Activated CD4-positive, alpha-beta memory T cell treated with anti-CD3 and anti-CD28 coated beads for 36 hours (primary cell): ENCODE measurements at regions of chr5 and their contacts with region 1.

Region 1: GRCh38 chr5:378301-378891 is 56.9 kb downstream of the AHRR start:
- DNase-seq: peak; percentile 74
- H3K4me3 Mint-ChIP-seq: peak overlapping the region; percentile 61
- H3K27ac Mint-ChIP-seq: peak overlapping the region; percentile 94
- H3K4me1 Mint-ChIP-seq: peaks cover 57% of the 10 kb centered on the region
- H3K27me3 Mint-ChIP-seq: peaks cover 9% of the 10 kb centered on the region

Region 2: DNA sequence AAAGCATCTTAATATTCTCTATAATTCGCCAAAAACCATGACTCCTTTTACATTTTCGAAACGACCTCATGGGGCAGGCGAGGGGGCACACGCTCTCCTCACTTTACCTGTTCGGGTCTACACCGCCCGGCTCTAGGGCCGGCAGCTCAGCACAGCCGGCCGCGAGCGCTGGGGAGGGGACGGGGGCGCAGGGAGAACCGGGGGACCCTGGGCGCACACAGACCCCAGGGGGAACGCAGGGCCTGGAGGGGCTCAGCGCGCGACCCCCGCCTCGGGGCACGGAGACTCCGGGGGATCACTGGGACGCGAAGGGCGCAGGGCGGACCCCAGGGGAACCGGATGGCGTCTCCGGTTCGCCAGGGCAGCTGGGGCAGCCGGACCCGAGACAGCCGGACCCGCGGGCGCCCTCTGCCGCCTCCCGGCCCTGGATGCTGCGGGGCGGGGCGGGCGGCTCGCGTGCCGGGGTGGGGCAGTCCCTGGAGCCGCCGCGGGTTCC is 57.1 kb before region 1 on chr5 and contains the start of gene AHRR:
- CTCF ChIA-PET with region 1: no interaction called
- POLR2A ChIA-PET with region 1: no interaction called
- intact Hi-C with region 1: no loop called
- DNase-seq: peak; percentile 71
- H3K4me3 Mint-ChIP-seq: peak within 1 kb of the TSS; percentile 69
- H3K27ac Mint-ChIP-seq: no peak within 1 kb of the TSS
- H3K4me1 Mint-ChIP-seq: peaks cover 9% of the 10 kb centered on the region
- H3K27me3 Mint-ChIP-seq: peaks cover 30% of the 10 kb centered on the region
- total RNA-seq, gene AHRR: 16.7 to 16.8 TPM

Region 3: DNA sequence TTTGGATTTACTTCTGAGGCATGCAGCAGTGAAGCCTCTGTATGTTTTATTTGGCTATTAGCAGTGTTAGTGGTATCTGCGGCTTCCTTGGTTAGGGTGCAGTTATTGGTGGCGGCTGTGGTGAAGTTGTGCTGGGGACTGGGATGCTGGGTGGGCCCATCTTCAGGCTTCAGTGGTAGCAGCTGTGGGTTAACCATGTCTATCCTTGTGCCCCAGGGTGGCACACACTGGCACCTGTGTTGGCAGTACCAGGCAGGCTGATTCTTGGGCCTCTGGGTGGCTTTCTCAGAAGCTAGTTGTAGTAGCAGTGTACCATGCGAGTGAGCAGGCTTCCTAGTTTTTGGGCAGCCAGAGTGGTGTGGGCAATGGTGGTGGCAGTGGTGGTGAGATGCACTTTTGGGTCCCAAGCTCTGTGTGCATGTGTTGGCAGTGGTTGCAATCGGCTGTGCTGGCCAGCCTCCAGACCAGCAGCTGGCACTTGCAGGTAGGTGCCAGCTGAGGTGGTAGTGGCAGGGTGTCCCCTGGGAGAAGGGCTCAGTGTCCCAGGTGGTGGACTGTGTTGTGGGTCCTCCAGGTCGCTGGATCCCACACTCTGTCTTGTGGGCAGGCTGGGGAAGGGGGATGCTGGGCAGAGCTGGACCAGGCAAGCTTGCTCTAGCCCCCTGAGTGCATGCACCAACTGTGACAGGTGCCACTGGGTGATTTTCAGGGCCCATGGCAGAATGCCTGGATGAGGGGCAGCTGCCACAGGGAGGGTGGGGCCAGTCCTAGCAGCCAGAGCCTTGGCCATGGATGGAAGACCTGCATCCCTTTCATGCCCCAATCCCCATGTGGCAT is 43.3 kb before region 1 on chr5:
- CTCF ChIA-PET with region 1: interaction called, 3 read pairs
- POLR2A ChIA-PET with region 1: interaction called, 4 read pairs
- intact Hi-C with region 1: loop called (anchors 1 kb)
- DNase-seq: no peak
- H3K4me3 Mint-ChIP-seq: peak overlapping the region; percentile 12
- H3K27ac Mint-ChIP-seq: peak overlapping the region; percentile 66
- H3K4me1 Mint-ChIP-seq: peaks cover 33% of the 10 kb centered on the region
- H3K27me3 Mint-ChIP-seq: peaks cover 7% of the 10 kb centered on the region

Region 4: GRCh38 chr5:362978-363765 is 15.2 kb before region 1 on chr5:
- CTCF ChIA-PET with region 1: no interaction called
- POLR2A ChIA-PET with region 1: no interaction called
- intact Hi-C with region 1: no loop called
- DNase-seq: no peak
- H3K4me3 Mint-ChIP-seq: no peak overlapping the region
- H3K27ac Mint-ChIP-seq: no peak overlapping the region
- H3K4me1 Mint-ChIP-seq: peaks cover under 1% of the 10 kb centered on the region
- H3K27me3 Mint-ChIP-seq: peaks cover 4% of the 10 kb centered on the region

Region 5: DNA sequence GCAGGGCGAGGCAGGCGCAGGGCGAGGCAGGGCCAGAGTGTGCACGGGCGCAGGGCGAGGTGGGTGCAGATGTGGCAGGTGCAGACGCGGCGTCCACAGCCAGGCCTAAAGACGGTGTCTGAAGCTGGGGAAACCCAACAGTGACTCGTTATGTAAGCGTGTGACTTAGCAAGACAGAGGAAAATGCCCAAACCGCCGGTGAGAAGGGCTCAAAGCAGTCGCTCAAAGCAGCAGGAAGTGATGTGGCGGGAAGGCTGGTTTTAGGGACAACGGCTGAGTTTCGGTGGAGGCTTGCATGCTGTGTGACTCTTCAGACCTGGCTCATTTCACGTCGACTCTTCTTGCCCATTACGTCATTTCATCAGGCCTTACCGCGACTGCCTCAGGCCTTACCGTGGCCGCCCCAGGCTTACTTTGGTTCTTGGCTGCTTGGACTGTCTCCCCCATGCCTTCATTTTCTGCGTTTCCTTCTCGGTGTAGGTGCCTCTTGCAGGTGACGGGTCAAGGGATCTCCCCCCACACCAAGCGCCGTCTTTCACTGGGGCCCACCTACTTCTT is 14.1 kb after region 1 on chr5:
- CTCF ChIA-PET with region 1: no interaction called
- POLR2A ChIA-PET with region 1: interaction called, 14 read pairs
- intact Hi-C with region 1: loop called (anchors 1 kb)
- DNase-seq: peak; percentile 94
- H3K4me3 Mint-ChIP-seq: peak overlapping the region; percentile 71
- H3K27ac Mint-ChIP-seq: peak overlapping the region; percentile 93
- H3K4me1 Mint-ChIP-seq: peaks cover 25% of the 10 kb centered on the region
- H3K27me3 Mint-ChIP-seq: no peaks in the 10 kb centered on the region

Region 6: DNA sequence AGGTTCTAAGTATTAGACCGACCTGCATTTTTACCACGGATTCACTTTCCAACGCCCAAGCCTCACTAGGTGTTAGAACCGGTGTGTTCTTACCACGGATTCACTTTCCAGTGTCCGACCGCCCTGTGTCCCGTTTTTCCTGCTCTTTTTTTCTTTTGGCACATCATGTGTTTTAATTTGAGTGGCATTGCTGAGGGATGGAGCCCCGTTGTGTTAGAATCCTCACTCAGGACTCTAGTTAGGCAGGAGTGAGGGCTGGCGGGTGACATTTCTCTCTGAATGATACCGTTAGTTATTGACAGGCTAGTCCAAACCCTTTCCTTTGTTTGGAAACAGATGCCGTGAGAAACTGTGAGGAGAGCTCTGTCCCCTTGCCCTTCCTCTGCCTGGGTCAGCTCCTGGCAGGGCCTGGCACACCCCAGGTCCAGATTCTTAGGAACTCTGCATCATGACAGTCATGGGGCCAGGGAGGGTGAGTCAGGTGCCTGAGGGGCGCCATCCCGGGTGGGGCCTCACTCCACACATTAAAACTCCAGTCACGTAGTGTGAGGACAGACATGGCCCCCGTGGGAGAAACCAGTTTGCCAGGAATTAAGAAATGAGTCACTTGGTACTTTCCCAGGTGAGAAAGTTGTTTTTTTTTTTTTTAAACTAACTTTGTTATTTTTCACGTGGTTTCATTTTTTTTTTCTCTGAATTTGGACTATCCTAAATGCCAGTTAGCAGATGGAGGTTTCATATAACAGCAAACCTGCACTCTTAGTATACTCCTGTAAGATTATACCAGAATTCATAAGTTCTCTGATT is 80.4 kb after region 1 on chr5:
- CTCF ChIA-PET with region 1: no interaction called
- POLR2A ChIA-PET with region 1: no interaction called
- intact Hi-C with region 1: loop called (anchors 5 kb)
- DNase-seq: peak; percentile 85
- H3K4me3 Mint-ChIP-seq: peak overlapping the region; percentile 47
- H3K27ac Mint-ChIP-seq: peak overlapping the region; percentile 94
- H3K4me1 Mint-ChIP-seq: peaks cover 59% of the 10 kb centered on the region
- H3K27me3 Mint-ChIP-seq: no peaks in the 10 kb centered on the region

Region 7: DNA sequence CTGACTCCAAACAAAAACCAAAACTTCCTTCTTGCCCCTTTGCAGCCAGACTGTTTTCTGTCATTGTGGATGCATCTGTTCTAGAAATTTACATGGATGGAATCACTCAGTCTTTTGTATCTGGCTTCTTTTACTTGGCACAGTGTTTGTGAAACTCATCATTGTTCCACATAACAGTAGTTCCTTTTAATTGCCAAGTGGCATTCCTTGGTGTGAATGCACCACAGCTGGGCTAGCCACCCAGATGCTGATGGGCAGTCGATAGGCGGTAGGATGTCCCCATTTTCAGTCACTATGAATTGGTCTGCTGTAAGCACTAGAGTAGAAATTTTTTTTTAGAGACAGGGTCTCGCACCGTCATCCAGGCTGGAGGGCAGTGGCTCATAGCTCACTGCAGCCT is 972.8 kb after region 1 on chr5:
- CTCF ChIA-PET with region 1: no interaction called
- POLR2A ChIA-PET with region 1: no interaction called
- intact Hi-C with region 1: no loop called
- DNase-seq: no peak
- H3K4me3 Mint-ChIP-seq: no peak overlapping the region
- H3K27ac Mint-ChIP-seq: no peak overlapping the region
- H3K4me1 Mint-ChIP-seq: peaks cover 4% of the 10 kb centered on the region
- H3K27me3 Mint-ChIP-seq: no peaks in the 10 kb centered on the region